ENCODE measurements at regions of chr2 and their contacts with region 1.

Region 1: DNA sequence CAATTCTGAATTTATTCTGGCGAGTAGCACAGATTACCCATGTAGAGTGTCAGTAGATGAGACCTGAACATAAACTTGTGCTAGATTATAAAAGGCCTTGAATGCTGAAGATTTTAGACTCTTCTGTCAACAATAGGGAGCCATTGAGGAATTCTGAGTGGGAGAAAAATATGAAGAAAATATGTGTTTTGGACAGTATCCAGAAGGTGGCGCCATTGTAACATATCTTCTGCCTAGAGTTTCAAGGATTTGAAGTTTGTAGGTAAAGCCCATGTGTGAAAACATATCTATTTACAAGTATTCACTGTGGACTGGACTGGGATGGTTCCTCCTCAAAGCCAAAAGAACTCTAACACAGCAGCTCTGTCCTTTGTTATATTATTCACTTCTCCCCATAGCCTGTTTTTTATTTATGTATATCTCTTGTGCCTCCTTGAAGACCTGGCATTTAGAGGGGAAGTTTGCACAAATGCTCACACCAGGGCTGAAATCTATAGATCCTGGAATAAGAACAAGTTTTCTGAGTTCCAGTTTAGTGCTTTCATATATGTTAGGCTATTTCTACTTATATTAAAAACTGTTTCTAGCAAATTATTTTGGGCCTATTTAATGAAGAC is 124.9 kb downstream of the RDH14 start:
- DNase-seq: no peak
- H3K4me3 ChIP-seq: no peak overlapping the region
- CTCF ChIP-seq: peak; percentile 39

Region 2: DNA sequence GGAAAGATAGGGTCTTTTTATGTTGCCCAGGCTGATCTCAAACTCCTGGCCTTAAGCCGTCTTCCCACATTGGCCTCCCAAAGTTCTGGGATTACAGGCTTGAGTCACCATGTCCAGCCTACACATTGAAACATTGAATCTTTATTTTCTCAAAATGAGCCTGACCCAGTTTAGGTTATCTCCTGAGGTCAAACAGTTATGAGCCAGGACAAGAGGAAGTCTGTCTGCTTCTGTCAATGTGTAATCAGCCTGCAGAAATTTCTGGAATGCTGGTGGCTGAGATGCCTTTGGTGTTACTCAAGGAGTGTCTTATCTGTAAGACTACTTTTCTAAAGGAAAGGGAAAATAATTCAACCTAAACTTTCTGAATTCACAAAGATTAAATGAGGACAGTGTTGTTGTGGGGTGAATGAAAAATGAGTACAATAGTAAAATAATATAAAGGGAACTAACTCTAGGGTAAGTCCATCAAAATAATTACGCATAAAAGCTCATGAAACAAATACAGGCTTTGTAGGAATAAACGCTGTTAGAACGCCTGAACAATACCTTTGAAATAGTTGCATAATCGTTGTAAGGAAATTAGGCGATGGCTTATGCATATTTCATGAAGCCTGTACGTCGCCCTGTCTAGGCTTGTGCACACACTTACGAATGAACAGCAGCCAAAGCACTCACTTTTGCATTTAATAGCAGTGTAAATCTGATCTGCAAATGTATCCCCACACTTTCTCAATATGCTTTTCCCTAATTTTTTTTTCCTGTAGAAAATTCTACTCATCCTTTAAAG is 135.9 kb before region 1 on chr2:
- CTCF ChIA-PET with region 1: no interaction called
- POLR2A ChIA-PET with region 1: no interaction called
- DNase-seq: peak; percentile 84
- H3K4me3 ChIP-seq: peak overlapping the region; percentile 6; the same call in 1 of the 2 replicates
- CTCF ChIP-seq: no peak

Region 3: GRCh38 chr2:18413676-18414396 is 21.7 kb before region 1 on chr2:
- CTCF ChIA-PET with region 1: interaction called, 17 read pairs
- POLR2A ChIA-PET with region 1: no interaction called
- DNase-seq: peak; percentile 46
- H3K4me3 ChIP-seq: no peak overlapping the region
- CTCF ChIP-seq: no peak

Region 4: DNA sequence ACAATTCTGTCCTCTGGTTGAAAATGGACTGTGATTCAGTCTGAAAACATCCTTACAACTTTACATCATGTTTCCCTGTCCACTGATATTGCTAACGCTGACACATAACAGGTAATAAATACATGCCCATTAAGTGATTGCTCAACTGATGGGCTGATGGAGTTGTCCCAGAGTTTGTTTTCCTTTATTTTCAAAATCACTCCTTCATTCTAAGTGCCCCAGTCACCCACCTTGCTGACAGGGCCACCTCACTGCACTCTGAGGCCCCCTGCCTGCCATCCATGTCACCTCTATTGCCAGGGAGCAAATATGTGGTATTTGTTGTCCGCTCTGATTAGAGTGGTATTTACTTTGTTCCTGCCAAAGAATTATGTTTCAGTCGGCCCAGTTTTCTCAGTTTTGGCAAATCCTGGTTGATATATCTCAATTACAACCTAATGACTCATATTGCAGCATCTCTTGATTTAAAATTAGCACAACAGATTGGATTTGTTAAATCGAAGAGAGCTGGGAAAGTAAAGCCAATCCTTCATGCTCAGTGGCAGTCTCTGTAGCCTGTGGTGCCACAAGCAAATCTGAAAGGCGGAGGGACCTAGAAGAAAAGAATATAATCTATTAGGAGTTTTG is 19.8 kb after region 1 on chr2:
- CTCF ChIA-PET with region 1: interaction called, 15 read pairs
- POLR2A ChIA-PET with region 1: no interaction called
- DNase-seq: peak; percentile 70
- H3K4me3 ChIP-seq: no peak overlapping the region
- CTCF ChIP-seq: peak; percentile 36

Measured in AG04449 (cell line).